Left ventricle myocardium superior (tissue), 1 donor: ENCODE measurements at regions of chr10 and their contacts with region 1.

Region 1: GRCh38 chr10:5623081-5623748 is 43.2 kb downstream of the ASB13 start:
- DNase-seq: peak; percentile 93
- ATAC-seq: peak; percentile 93

Region 2: GRCh38 chr10:5442065-5442989 is 180.9 kb before region 1 on chr10:
- intact Hi-C with region 1: loop called (anchors 2 kb)
- DNase-seq: no peak
- ATAC-seq: no peak